Naive thymus-derived CD8-positive, alpha-beta T cell (primary cell): ENCODE measurements at regions of chr7 and their contacts with region 1.

Region 1: DNA sequence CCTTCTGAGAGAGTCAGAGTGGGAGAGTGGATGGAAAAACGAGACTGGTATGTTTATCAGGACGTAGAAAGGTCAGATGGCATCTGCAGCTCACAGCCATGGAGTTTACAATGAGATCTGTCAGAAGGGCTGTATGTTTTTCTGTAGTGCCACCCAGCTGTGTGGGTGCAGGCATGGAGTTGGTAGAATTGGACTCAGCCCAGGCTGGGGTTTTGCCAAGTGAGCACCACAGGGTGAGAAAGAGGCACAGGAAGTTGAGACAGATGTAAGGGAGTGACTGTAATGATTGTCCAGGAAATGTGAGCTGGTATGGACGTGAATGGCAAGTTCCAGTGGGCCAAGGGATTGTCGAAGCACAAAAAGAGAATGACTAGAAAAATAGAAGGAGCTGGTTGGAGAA is 9.1 kb upstream of the ZYX start:
- DNase-seq: peak in 9 of 10 donors; percentile 37 to 81 (median 59)
- ATAC-seq: peak; percentile 58 to 69
- H3K4me3 Mint-ChIP-seq: peak overlapping the region; percentile 2 to 83 (median 42)
- H3K27ac Mint-ChIP-seq: peak overlapping the region; percentile 38 to 94 (median 76)
- H3K4me1 Mint-ChIP-seq: peaks cover 45 to 66% (median 57%) of the 10 kb centered on the region in 4 donors
- H3K27me3 Mint-ChIP-seq: no peaks in the 10 kb centered on the region

Region 2: DNA sequence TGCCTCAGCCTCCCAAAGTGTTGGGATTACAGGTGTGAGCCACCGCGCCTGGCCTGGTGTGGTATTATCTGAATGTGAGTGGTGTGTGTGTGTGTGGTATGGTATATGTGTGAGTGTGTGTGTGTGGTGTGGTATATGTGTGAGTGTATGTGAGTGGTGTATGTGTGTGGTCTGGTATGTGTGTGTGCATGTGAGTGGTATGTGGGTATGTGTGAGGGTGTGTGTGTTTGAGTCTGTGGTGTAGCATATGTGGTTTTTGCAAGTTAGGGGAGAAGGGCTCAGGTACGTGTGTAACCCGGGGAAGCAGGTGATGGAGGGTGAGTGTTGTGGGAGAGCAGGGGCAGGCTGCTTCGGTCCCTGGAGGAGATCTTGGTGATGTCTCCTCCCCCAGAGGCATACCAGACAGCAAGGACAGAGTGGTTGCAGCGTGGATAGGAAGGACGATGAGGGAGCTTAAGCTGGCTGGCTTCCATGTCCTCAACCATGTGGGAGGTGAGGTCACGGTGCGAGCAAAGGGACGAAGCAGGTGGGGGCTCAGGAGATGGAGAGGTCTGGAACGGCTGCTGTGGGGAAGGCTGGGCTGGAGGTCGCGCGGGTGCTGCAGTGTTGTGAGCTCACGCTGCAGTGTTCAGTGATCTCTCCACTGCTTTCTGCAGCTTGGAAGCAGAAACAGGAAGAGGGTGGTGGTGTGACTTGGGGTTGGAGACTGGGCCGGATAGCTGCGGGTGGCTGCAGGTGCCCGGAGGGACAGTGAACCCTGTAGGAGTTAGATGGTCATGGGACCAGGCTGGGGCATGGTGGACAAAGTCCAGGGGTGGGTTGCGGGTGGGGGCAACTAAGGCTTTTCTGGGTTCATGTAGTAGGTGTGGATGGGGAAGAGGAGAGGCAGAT is 14.1 kb after region 1 on chr7:
- POLR2A ChIA-PET with region 1: interaction called, 36 read pairs
- DNase-seq: peak in 7 of 10 donors; percentile 26 to 66 (median 57)
- ATAC-seq: peak; percentile 42 to 58
- H3K4me3 Mint-ChIP-seq: no peak overlapping the region
- H3K27ac Mint-ChIP-seq: no peak overlapping the region
- H3K4me1 Mint-ChIP-seq: peaks cover 9 to 26% (median 18%) of the 10 kb centered on the region in 4 donors
- H3K27me3 Mint-ChIP-seq: no peaks in the 10 kb centered on the region